ENCODE measurements at regions of chr14 and their contacts with region 1.

Region 1: DNA sequence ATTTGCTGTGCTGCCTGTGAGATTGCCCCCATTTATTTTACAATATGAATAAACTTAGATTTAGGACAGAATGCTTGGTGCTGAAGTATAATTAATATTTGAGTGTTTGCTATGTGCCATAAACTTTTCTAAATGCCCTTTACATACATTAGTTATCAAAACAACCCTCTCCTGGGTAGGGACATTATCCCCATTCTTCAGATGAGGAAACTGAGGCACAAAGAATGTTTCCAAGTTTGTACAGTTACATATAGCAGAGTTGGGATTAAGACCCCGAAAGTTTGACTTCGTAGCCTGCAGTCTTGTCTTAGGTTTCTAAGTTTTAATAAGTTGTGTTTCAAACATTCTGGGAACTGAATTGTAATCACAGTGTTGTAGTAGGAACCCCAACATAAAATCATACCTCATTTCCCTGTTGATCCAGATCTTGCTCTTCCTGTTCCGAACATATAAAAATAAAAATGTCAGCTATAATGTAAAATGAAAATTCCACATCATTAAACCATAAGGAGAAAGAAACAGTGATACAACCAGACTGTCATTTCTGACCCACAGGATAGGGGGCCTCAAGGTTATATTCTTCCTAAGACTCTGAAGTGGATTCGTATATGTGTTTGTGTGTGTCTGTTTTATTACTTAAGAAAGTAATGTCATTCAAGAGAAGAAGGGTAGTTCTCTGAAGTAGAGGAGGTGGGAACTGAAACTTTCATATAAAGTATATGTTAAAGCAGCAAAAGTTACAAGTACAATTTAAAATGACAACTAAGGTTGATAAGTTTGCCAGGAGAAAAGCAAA is 18.6 kb downstream of the KLHDC2 start:
- DNase-seq: no peak
- H3K4me3 ChIP-seq: no peak overlapping the region
- H3K27ac ChIP-seq: no peak overlapping the region
- H3K4me1 ChIP-seq: no peaks in the 10 kb centered on the region
- H3K27me3 ChIP-seq: no peaks in the 10 kb centered on the region
- CTCF ChIP-seq: no peak
- POLR2A ChIP-seq: no peak

Region 2: GRCh38 chr14:49828640-49829039 is 42.1 kb after region 1 on chr14:
- intact Hi-C with region 1: loop called (anchors 10 kb)
- DNase-seq: no peak
- H3K4me3 ChIP-seq: no peak overlapping the region
- H3K27ac ChIP-seq: no peak overlapping the region
- H3K4me1 ChIP-seq: no peaks in the 10 kb centered on the region
- H3K27me3 ChIP-seq: no peaks in the 10 kb centered on the region
- CTCF ChIP-seq: no peak
- POLR2A ChIP-seq: no peak